Gastrocnemius medialis (tissue), 4 donors: ENCODE measurements at regions of chr13 and their contacts with region 1.

Region 1: DNA sequence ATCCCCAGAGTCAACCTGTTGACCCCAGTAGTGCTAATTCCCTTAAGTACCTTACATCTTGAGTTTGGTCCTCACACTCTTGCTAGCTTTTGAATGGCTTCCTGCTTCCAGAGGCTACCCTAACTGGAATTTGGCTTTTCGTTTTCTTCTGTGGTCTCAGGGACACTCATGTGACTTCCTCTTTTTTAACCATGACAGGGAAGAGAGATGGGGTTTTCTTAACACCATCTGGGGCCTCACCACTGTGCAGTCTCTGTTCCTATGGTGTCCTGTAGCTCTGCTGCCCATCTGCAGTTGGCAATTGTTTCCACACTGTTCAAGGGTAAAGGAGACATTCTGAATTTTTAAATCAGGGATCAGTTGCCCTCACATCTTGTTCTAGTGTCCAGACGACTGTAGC is 66.7 kb downstream of the SLC10A2 start:
- DNase-seq: no peak
- ATAC-seq: no peak
- H3K4me3 ChIP-seq: no peak overlapping the region
- H3K27ac ChIP-seq: no peak overlapping the region
- H3K4me1 ChIP-seq: no peaks in the 10 kb centered on the region
- H3K27me3 ChIP-seq: no peaks in the 10 kb centered on the region
- CTCF ChIP-seq: no peak
- POLR2A ChIP-seq: no peak

Region 2: DNA sequence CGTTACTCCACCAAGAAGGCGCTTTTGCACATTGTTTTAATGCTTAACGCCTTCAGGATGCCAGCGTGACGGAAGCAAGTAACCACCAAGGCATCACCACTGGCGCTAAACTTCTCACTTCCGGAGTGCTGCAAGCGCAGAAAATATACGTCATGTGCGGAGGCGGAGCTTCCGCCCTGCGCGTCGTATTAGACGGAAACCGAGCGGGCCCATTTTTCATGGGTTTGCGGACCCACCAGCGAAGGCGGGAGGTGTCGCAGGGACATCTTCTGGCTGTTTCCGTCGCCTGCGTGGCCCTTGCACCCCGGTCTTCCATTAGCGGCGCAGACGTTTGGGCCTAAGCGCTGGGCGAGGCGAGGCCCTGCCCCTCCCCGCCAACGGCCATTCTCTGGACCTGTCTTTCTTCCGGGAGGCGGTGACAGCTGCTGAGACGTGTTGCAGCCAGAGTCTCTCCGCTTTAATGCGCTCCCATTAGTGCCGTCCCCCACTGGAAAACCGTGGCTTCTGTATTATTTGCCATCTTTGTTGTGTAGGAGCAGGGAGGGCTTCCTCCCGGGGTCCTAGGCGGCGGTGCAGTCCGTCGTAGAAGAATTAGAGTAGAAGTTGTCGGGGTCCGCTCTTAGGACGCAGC is 153.8 kb before region 1 on chr13 and contains the start of gene ERCC5:
- in situ Hi-C with region 1: no loop called
- intact Hi-C with region 1: no loop called
- DNase-seq: peak; percentile 85 to 91
- ATAC-seq: peak; percentile 90 to 92
- H3K4me3 ChIP-seq: peak within 1 kb of the TSS; percentile 75 to 94 (median 92)
- H3K27ac ChIP-seq: peak within 1 kb of the TSS; percentile 92 to 98 (median 96)
- H3K4me1 ChIP-seq: peaks cover 19 to 21% of the 10 kb centered on the region in 2 donors
- H3K27me3 ChIP-seq: no peaks in the 10 kb centered on the region
- CTCF ChIP-seq: peak in 1 of 5 experiments; percentile 42
- POLR2A ChIP-seq: peak; percentile 63 to 70
- total RNA-seq, gene ERCC5: 43.5 to 77.7 (median 46.8) TPM

Region 3: DNA sequence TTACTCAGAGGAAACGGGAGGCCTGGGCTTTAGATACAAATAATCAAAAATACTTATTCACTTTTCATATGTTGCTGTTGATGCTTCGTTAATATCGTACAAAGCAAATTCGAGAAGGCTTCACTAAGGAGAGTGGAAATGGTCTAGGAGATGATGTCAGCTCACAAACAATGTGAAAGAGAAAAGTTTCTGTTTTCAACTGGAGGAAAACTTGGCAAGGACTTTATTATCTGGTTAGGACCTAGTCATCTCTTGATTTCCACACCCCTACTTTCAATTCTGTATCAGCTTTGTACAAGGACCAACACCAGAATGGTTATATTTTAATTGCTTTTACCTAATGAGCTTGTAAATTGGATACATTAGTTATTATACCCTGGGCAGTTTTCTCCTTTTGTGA is 21.3 kb before region 1 on chr13:
- in situ Hi-C with region 1: no loop called
- intact Hi-C with region 1: no loop called
- DNase-seq: no peak
- ATAC-seq: peak in 1 of 2 donors; percentile 50
- H3K4me3 ChIP-seq: peak overlapping the region; percentile 2 to 33 (median 6)
- H3K27ac ChIP-seq: no peak overlapping the region
- H3K4me1 ChIP-seq: no peaks in the 10 kb centered on the region
- H3K27me3 ChIP-seq: no peaks in the 10 kb centered on the region
- CTCF ChIP-seq: no peak
- POLR2A ChIP-seq: no peak

Region 4: GRCh38 chr13:103055166-103055565 is 55.7 kb after region 1 on chr13:
- in situ Hi-C with region 1: loop called in 1 of 4 experiments (anchors 10 kb)
- intact Hi-C with region 1: no loop called
- DNase-seq: no peak
- ATAC-seq: no peak
- H3K4me3 ChIP-seq: no peak overlapping the region
- H3K27ac ChIP-seq: no peak overlapping the region
- H3K4me1 ChIP-seq: no peaks in the 10 kb centered on the region
- H3K27me3 ChIP-seq: no peaks in the 10 kb centered on the region
- CTCF ChIP-seq: no peak
- POLR2A ChIP-seq: no peak